HCT116 (cell line): ENCODE measurements at regions of chr1 and their contacts with region 1.

Region 1: DNA sequence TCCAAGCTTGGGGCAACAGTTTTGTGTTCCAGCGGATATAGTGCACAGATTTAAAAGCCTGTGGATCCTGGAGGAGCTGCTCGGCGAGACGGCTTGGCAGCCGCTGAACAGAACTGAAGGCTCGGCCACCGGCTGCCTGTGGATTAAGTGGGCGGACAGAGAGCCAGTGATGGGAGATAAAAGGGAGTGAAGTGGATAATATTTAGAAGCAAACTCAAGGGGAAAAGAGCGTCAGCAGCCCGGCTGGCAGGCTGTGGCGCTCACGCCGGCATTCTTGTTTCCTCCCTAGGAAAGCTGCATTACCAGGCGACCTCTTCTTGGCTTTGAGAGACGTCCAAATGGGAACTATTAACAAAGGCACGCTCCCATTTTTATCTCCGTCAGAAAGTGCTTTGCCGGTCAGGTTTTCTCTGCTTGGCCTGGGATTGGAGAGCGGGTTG is 10.4 kb downstream of the TRABD2B start:
- DNase-seq: no peak
- ATAC-seq: no peak
- H3K4me3 ChIP-seq: no peak overlapping the region
- H3K27ac ChIP-seq: no peak overlapping the region
- H3K4me1 ChIP-seq: peaks cover 6 to 11% of the 10 kb centered on the region in 2 experiments; a peak in 3 of 4 replicates
- H3K27me3 ChIP-seq: no peaks in the 10 kb centered on the region
- CTCF ChIP-seq: no peak
- POLR2A ChIP-seq: no peak
- RAD21 ChIP-seq: no peak

Region 2: GRCh38 chr1:47997289-47998200 is 10.8 kb after region 1 on chr1 and contains the start of gene TRABD2B:
- CTCF ChIA-PET with region 1: interaction called, 10 read pairs
- POLR2A ChIA-PET with region 1: no interaction called
- RAD21 ChIA-PET with region 1: no interaction called
- intact Hi-C with region 1: no loop called
- DNase-seq: peak; percentile 26
- ATAC-seq: peak; percentile 97
- H3K4me3 ChIP-seq: peak within 1 kb of the TSS; percentile 27 to 42
- H3K27ac ChIP-seq: no peak within 1 kb of the TSS
- H3K4me1 ChIP-seq: peaks cover 0 to 3% of the 10 kb centered on the region in 2 experiments; a peak in 2 of 4 replicates
- H3K27me3 ChIP-seq: peaks cover 18% of the 10 kb centered on the region; the same call in 1 of the 2 replicates
- CTCF ChIP-seq: peak; percentile 81 to 96 (median 92)
- POLR2A ChIP-seq: no peak
- RAD21 ChIP-seq: peak; percentile 78
- total RNA-seq, gene TRABD2B: 0.05 TPM

Region 3: GRCh38 chr1:48227165-48228013 is 240.6 kb after region 1 on chr1:
- CTCF ChIA-PET with region 1: no interaction called
- POLR2A ChIA-PET with region 1: no interaction called
- RAD21 ChIA-PET with region 1: no interaction called
- intact Hi-C with region 1: no loop called
- DNase-seq: no peak
- ATAC-seq: no peak
- H3K4me3 ChIP-seq: no peak overlapping the region
- H3K27ac ChIP-seq: no peak overlapping the region
- H3K4me1 ChIP-seq: no peaks in the 10 kb centered on the region
- H3K27me3 ChIP-seq: no peaks in the 10 kb centered on the region
- CTCF ChIP-seq: no peak
- POLR2A ChIP-seq: no peak
- RAD21 ChIP-seq: no peak